ENCODE measurements at regions of chr21 and their contacts with region 1.

Region 1: DNA sequence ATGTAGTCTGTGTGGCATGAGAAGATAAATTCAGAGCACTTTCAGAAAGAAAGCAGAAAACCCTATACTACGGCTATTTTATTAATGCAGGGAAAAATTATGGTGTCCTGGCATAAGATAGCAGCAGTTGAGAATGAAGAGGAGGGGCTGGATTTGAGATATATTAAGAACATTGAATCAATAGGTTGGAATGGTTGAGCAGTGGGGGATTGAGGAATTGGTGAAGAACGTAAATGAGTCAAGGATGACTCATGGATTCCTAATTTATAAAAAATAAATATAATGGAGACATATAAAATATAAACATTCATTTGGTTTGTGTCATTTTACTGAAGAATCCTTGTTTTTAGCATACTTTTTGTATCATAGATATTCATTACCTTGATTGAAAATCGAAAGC is 234.3 kb upstream of the ADAMTS5 start:
- DNase-seq: no peak
- ATAC-seq: no peak
- H3K4me3 ChIP-seq: no peak overlapping the region
- H3K27ac ChIP-seq: no peak overlapping the region
- H3K4me1 ChIP-seq: no peaks in the 10 kb centered on the region
- H3K27me3 ChIP-seq: no peaks in the 10 kb centered on the region
- CTCF ChIP-seq: no peak
- EP300 ChIP-seq: no peak
- POLR2A ChIP-seq: no peak
- RAD21 ChIP-seq: no peak

Region 2: DNA sequence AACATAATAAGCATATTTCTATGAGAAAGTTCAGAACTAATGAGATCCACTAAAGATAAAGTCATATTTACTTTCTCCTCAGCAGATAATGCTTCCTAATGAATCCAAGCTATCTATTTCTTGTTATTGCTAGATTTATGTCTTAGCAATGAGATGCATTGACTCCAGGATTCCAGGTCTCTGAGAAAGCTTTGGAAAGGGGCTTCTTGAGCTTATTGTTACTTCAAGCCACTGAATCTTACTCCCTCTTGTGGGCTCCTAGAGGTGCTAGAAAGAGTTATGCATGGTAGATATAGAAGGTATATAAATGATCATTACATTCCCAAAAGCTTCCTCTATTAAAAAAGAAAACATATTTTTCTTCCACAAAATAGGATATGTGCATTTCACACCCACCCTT is 12.1 kb after region 1 on chr21:
- CTCF ChIA-PET with region 1: no interaction called
- POLR2A ChIA-PET with region 1: no interaction called
- in situ Hi-C with region 1: no loop called
- intact Hi-C with region 1: loop called (anchors 1 kb)
- DNase-seq: no peak
- ATAC-seq: no peak
- H3K4me3 ChIP-seq: no peak overlapping the region
- H3K27ac ChIP-seq: no peak overlapping the region
- H3K4me1 ChIP-seq: no peaks in the 10 kb centered on the region
- H3K27me3 ChIP-seq: no peaks in the 10 kb centered on the region
- CTCF ChIP-seq: no peak
- EP300 ChIP-seq: no peak
- POLR2A ChIP-seq: no peak
- RAD21 ChIP-seq: no peak

Measured in HepG2 (cell line).